ENCODE measurements at regions of chr2 and their contacts with region 1.

Region 1: DNA sequence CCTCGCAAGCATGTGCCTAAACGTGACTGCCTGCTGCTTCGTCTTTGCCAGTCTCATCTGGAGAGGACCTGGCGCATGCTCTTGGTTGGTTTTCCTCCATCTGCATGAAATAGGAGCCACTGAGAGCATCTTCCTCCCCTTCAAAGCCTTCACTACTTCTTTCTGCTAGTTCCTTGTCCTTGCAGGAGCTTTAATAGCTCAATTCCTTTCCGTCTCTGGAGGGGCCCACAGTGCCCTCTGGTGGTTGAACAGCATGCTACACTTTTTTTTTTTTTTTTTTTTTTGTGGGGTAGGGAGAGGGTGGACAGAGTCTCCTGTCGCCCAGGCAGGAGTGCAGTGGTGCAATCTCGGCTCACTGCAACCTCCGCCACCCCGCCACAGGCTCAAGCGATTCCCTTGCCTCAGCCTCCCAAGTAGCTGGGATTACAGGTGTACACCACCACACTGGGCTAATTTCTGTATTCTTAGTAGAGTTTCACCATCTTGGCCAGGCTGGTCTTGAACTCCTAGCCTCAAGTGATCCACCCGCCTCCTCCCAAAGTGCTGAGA is 59.6 kb downstream of the SP110 start:
- DNase-seq: peak; percentile 71
- H3K4me3 ChIP-seq: no peak overlapping the region
- H3K27ac ChIP-seq: no peak overlapping the region
- H3K4me1 ChIP-seq: no peaks in the 10 kb centered on the region
- H3K27me3 ChIP-seq: peaks cover 0 to 7% of the 10 kb centered on the region in 2 experiments
- CTCF ChIP-seq: peak; percentile 65 to 76
- POLR2A ChIP-seq: no peak

Region 2: DNA sequence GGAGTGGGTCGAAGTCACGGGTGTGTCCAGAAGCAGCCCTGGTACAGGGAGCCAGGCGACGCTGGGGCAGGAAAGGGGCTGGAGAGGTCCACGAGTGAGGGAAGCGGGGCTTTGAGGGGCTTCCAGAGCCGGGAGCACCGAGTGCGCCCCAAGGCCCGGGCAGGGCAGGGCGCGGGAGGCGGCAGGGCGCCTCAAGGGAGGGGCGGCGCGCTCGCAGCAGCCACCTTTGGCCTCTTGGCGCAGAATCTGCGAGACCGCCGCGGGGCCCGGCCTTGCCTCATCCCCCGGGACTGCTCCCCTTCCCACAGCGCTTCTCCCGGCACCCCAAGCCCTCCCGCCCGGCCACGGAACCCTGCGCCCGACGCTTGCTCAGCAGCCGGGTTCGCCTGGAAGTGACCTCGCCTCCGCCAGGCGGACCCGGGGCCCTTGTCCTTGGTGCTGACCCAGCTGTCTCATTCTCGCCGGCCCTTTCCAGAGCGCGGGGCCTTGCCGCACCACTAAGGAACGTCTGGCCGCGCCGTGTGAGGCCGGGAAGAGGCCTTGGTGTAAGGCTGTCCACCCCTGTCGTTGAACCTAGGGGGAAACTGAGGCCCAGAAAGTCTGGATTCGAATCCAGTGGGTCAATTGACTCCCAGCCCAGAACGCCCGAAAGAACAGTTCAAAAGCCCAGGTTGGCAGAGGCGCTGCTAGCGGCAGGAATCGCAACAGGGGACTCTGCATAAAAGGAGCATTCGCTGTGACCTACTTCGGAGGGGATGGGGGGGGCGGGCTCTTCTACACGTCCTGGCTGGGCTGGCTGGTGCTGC is 445.2 kb before region 1 on chr2:
- CTCF ChIA-PET with region 1: interaction called, 10 read pairs
- POLR2A ChIA-PET with region 1: no interaction called
- dilution Hi-C with region 1: no loop called
- intact Hi-C with region 1: no loop called
- DNase-seq: peak; percentile 50
- H3K4me3 ChIP-seq: peak overlapping the region in 2 of 3 experiments; percentile 18 to 20
- H3K27ac ChIP-seq: no peak overlapping the region
- H3K4me1 ChIP-seq: peaks cover 6% of the 10 kb centered on the region
- H3K27me3 ChIP-seq: peaks cover 22 to 41% of the 10 kb centered on the region in 2 experiments
- CTCF ChIP-seq: no peak
- POLR2A ChIP-seq: no peak

Region 3: GRCh38 chr2:230007931-230008707 is 152.1 kb before region 1 on chr2:
- CTCF ChIA-PET with region 1: interaction called, 121 read pairs
- POLR2A ChIA-PET with region 1: no interaction called
- dilution Hi-C with region 1: no loop called
- intact Hi-C with region 1: loop called (anchors 1 kb)
- DNase-seq: peak; percentile 78
- H3K4me3 ChIP-seq: peak overlapping the region in 1 of 3 experiments; percentile 20
- H3K27ac ChIP-seq: no peak overlapping the region
- H3K4me1 ChIP-seq: peaks cover 7% of the 10 kb centered on the region
- H3K27me3 ChIP-seq: no peaks in the 10 kb centered on the region
- CTCF ChIP-seq: peak; percentile 67 to 78
- POLR2A ChIP-seq: no peak

Region 4: DNA sequence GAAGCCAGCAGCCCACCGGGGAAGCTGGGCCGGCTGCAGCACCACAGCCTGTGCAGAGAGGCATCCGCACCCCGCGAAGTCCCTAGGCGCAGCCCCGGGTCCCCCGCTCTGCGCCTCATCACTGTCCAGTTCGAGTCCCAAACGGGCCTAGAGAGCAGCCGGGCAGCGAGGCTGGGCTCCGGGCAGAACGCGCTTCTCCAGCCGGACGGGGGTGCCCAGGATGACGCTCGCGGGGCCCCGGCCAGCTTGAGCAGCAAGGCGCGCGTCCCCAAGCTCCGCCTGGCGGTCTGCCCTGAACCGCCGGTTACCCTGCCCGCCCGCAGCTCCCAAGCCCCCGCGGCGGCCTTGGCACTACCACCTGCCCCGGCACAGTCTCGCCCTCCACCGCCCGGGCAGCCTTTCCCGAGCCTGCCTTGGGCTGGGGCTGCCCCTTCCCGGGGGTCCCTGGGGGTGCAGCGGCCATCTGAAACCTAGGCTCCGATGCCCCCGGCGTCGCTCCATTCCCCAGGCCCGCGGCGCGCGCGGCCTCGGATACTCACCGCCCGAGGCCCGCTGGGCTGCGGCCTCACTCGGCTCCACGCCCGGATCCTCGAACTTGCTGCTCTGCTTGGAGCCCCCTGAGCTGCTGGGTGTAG is 92.1 kb before region 1 on chr2:
- CTCF ChIA-PET with region 1: interaction called, 127 read pairs
- POLR2A ChIA-PET with region 1: no interaction called
- dilution Hi-C with region 1: no loop called
- intact Hi-C with region 1: loop called (anchors 1 kb)
- DNase-seq: peak; percentile 50
- H3K4me3 ChIP-seq: peak overlapping the region; percentile 39 to 45 (median 44)
- H3K27ac ChIP-seq: no peak overlapping the region
- H3K4me1 ChIP-seq: peaks cover 7% of the 10 kb centered on the region
- H3K27me3 ChIP-seq: peaks cover 1 to 7% of the 10 kb centered on the region in 2 experiments
- CTCF ChIP-seq: peak in 1 of 2 donors; percentile 38
- POLR2A ChIP-seq: no peak

Region 5: DNA sequence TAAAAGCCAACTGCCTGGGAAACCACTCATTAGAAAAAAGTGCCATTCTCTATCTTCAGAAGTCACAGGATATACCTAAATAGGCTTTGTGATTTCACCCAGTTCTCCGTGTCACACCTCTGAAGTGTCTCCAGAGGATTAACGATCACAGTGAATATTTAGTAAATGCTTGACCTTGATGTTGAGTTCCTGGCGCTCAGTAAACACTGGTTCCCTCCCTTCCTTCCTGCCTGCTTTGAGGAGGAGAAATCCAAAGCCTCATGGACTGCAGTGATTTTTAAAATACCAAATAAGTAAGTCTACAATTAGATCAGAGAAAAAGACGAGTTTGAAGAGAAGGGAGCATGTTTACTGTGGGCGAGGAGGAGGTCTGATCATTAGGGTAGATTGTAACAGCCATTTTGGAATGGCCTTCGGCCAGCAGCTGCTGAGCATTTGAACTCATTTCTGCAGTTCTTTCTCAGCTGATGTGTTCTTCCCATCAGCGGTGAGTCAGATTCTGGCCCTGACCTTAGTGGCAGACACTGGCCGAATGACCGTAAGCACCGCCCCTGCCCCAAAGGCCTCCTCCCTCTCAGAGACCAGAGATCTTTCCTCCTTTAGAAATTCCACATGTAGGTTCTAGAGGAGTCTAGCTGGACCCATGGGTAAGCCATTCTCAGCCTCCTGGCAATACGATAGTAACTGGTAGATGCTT is 29.4 kb before region 1 on chr2:
- CTCF ChIA-PET with region 1: interaction called, 16 read pairs
- POLR2A ChIA-PET with region 1: no interaction called
- dilution Hi-C with region 1: no loop called
- intact Hi-C with region 1: no loop called
- DNase-seq: peak; percentile 74
- H3K4me3 ChIP-seq: peak overlapping the region in 1 of 3 experiments; percentile 18
- H3K27ac ChIP-seq: peak overlapping the region; percentile 52
- H3K4me1 ChIP-seq: peaks cover 13% of the 10 kb centered on the region
- H3K27me3 ChIP-seq: no peaks in the 10 kb centered on the region
- CTCF ChIP-seq: no peak
- POLR2A ChIP-seq: no peak

Region 6: GRCh38 chr2:230170532-230170931 is 10.3 kb after region 1 on chr2:
- CTCF ChIA-PET with region 1: interaction called, 61 read pairs
- POLR2A ChIA-PET with region 1: interaction called, 4 read pairs
- dilution Hi-C with region 1: no loop called
- intact Hi-C with region 1: no loop called
- DNase-seq: peak; percentile 56
- H3K4me3 ChIP-seq: no peak overlapping the region
- H3K27ac ChIP-seq: no peak overlapping the region
- H3K4me1 ChIP-seq: peaks cover 10% of the 10 kb centered on the region
- H3K27me3 ChIP-seq: peaks cover 0 to 2% of the 10 kb centered on the region in 2 experiments
- CTCF ChIP-seq: no peak
- POLR2A ChIP-seq: no peak